H1 (cell line): ENCODE measurements at regions of chr6 and their contacts with region 1.

Region 1: GRCh38 chr6:35297601-35298481 is at the start of gene DEF6:
- DNase-seq: peak; percentile 83 to 85
- H3K4me3 ChIP-seq: peak within 1 kb of the TSS in 1 of 4 experiments; percentile 49; a peak in 2 of 8 replicates
- H3K27ac ChIP-seq: no peak within 1 kb of the TSS
- H3K4me1 ChIP-seq: peaks cover 4 to 14% (median 11%) of the 10 kb centered on the region in 4 experiments
- H3K27me3 ChIP-seq: no peaks in the 10 kb centered on the region
- CTCF ChIP-seq: peak; percentile 95 to 98 (median 97)
- EP300 ChIP-seq: no peak; a peak in 1 of 3 replicates
- POLR2A ChIP-seq: 0 out of 3 replicates have a peak, but pooled peaks of 1 of the 2 experiments have one; percentile 14
- RAD21 ChIP-seq: peak; percentile 99 to 100
- total RNA-seq, gene DEF6: 4.1 and 4.5 TPM in 2 replicates

Region 2: GRCh38 chr6:35282472-35282871 is 15.4 kb before region 1 on chr6:
- CTCF ChIA-PET with region 1: interaction called, 17 read pairs
- POLR2A ChIA-PET with region 1: interaction called, 8 read pairs
- DNase-seq: no peak
- H3K4me3 ChIP-seq: no peak overlapping the region
- H3K27ac ChIP-seq: no peak overlapping the region
- H3K4me1 ChIP-seq: no peaks in the 10 kb centered on the region
- H3K27me3 ChIP-seq: no peaks in the 10 kb centered on the region; a peak in 1 of 7 replicates
- CTCF ChIP-seq: no peak
- EP300 ChIP-seq: no peak
- POLR2A ChIP-seq: no peak
- RAD21 ChIP-seq: no peak

Region 3: DNA sequence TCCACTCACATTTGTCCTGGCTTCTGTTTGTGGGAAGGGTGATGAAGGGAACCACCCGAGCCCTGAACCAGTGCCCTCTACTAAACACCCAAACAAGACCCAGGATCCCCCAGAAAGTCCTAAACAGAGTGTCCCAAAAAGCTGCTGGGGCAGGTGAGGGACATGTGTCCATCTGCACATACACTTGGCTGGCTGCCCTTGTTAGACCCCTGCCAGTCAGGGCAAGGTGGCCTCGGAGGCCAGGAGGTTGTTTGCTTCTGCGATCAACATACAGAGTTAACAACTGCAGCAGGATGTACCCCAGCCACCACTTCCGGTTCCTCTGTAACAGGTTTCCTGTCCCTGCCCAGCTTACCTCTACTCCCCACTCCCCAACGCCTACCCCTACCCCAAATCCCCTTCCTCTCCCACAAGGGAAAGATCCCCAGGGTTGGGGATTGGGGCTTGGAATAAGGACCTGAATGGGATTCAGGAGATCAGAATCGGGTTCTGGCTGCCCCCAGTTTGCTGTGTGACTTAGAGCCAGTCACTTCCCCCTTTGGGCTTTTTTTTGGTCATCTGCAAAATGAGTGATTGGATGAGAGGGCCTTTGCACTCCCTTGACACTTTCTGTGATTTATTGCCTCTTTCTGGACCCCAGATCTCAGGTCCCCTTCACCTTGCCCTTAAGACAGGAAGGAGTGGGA is 13.7 kb after region 1 on chr6:
- CTCF ChIA-PET with region 1: interaction called, 358 read pairs
- POLR2A ChIA-PET with region 1: interaction called, 8 read pairs
- DNase-seq: no peak
- H3K4me3 ChIP-seq: no peak overlapping the region
- H3K27ac ChIP-seq: no peak overlapping the region
- H3K4me1 ChIP-seq: no peaks in the 10 kb centered on the region
- H3K27me3 ChIP-seq: peaks cover 0 to 2% (median 1%) of the 10 kb centered on the region in 4 experiments; a peak in 3 of 7 replicates
- CTCF ChIP-seq: no peak
- EP300 ChIP-seq: no peak
- POLR2A ChIP-seq: no peak
- RAD21 ChIP-seq: no peak

Region 4: GRCh38 chr6:35342258-35343091 is 44.6 kb after region 1 on chr6 and contains the start of gene PPARD:
- CTCF ChIA-PET with region 1: interaction called, 24 read pairs
- POLR2A ChIA-PET with region 1: interaction called, 3 read pairs
- DNase-seq: peak; percentile 82 to 100
- H3K4me3 ChIP-seq: peak within 1 kb of the TSS; percentile 38 to 77 (median 62)
- H3K27ac ChIP-seq: no peak within 1 kb of the TSS
- H3K4me1 ChIP-seq: peaks cover 0 to 7% (median 1%) of the 10 kb centered on the region in 4 experiments; a peak in 3 of 7 replicates
- H3K27me3 ChIP-seq: no peaks in the 10 kb centered on the region
- CTCF ChIP-seq: peak; percentile 95 to 98 (median 95)
- EP300 ChIP-seq: no peak
- POLR2A ChIP-seq: 0 out of 3 replicates have a peak, but pooled peaks of 1 of the 2 experiments have one; percentile 21
- RAD21 ChIP-seq: peak; percentile 99 to 100
- total RNA-seq, gene PPARD: 14.9 and 16.9 TPM in 2 replicates

Region 5: GRCh38 chr6:35425284-35425683 is 127.4 kb after region 1 on chr6:
- CTCF ChIA-PET with region 1: interaction called, 63 read pairs
- POLR2A ChIA-PET with region 1: no interaction called
- DNase-seq: no peak
- H3K4me3 ChIP-seq: no peak overlapping the region
- H3K27ac ChIP-seq: 0 out of 2 replicates have a peak overlapping the region, but pooled peaks have one; percentile 9
- H3K4me1 ChIP-seq: peaks cover 6 to 28% (median 16%) of the 10 kb centered on the region in 4 experiments
- H3K27me3 ChIP-seq: no peaks in the 10 kb centered on the region
- CTCF ChIP-seq: no peak
- EP300 ChIP-seq: no peak
- POLR2A ChIP-seq: no peak
- RAD21 ChIP-seq: no peak

Region 6: GRCh38 chr6:35474131-35474940 is 176.5 kb after region 1 on chr6:
- CTCF ChIA-PET with region 1: interaction called, 30 read pairs
- POLR2A ChIA-PET with region 1: interaction called, 40 read pairs
- DNase-seq: peak in 1 of 2 experiments; percentile 65
- H3K4me3 ChIP-seq: no peak overlapping the region
- H3K27ac ChIP-seq: no peak overlapping the region
- H3K4me1 ChIP-seq: peaks cover 0 to 8% (median 5%) of the 10 kb centered on the region in 4 experiments; a peak in 6 of 7 replicates
- H3K27me3 ChIP-seq: no peaks in the 10 kb centered on the region
- CTCF ChIP-seq: no peak
- EP300 ChIP-seq: no peak
- POLR2A ChIP-seq: peak in 1 of 2 experiments; percentile 83; a peak in 2 of 3 replicates
- RAD21 ChIP-seq: no peak